ENCODE measurements at regions of chr19 and their contacts with region 1.

Region 1: DNA sequence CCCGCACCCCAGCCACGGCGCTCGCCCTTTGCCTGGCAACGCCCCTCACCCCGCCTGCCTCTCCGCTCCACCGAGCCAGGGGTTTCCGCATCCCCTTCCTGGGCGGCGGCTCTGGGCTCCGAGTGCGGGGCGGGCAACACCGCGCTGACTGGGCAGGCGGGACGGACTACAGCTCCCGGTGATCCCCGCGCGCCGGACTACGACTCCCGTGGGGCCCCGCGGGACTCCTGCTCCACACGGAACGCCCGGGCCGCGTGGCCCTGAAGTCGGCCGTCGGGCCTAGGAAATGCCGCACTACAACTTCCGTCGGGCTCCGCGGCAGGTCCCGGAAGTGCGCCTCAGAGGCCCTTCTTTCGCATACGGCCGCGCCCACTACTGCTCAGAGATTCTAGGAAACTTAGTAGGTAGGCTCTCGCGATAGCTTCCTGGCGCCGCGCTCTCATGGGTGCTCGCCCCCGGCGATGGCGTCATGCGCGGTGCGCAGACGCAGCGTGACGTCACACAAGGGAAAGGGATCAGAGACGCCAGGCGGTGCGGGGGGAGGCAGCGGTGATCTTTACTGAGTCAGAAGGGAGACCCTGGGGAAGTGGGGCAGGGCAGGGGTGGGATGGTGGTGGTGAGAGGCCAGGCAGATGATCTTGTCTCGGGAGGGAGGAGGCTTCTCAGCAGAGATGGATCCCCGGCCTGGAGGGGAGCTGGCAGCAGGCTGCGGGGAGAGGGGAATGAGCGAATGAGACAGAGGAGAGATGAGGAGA is at the start of gene JOSD2:
- DNase-seq: peak; percentile 97 to 100
- H3K4me3 ChIP-seq: peak within 1 kb of the TSS; percentile 80 to 92
- H3K27ac ChIP-seq: peak within 1 kb of the TSS; percentile 65 to 68
- H3K4me1 ChIP-seq: peaks cover 6% of the 10 kb centered on the region in 2 donors
- H3K27me3 ChIP-seq: no peaks in the 10 kb centered on the region
- CTCF ChIP-seq: no peak
- total RNA-seq, gene JOSD2: 169 TPM

Region 2: DNA sequence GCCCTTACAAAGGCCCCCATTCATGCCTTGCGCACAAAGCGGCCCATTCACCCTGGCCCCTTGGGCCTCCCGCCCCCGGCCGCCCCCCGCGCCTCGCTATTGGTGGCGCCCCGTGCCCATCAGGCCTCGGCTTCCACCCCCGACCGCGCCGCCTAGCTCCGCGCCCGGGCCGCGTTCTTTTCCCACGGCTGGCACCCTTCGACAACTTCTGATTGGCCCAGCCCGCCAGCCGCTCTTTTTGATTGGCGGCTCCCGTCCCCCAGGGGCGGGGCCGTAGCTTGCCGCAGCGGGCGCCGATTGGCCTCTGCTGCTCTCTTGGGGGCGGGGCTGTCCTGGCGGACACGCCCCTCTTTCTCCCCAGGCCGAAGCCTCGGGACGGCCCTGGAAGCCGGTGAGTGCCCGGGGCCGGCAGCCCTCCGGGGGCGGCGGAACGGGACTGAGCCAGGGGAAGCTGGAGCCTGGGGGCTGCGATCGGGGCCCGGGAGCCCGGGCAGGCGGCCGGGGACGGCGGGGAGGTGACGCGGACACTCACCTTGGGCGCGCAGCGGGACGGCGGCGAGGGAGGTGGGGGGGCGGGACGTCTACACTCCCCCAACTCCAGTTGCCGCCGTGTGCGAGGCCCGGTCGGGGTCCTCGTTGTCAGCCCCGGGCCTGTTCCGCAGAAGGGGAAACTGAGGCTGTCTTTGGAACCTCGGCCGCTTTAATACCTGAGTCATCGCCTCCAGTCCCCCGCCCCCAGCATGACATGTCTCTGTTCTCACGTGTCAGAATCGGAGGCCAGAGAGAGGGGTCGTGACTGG is 307.8 kb before region 1 on chr19 and contains the start of gene MYH14:
- intact Hi-C with region 1: loop called (anchors 10 kb)
- DNase-seq: peak; percentile 61 to 93
- H3K4me3 ChIP-seq: peak within 1 kb of the TSS; percentile 57 to 78
- H3K27ac ChIP-seq: no peak within 1 kb of the TSS
- H3K4me1 ChIP-seq: peaks cover 0 to 21% of the 10 kb centered on the region in 2 donors
- H3K27me3 ChIP-seq: no peaks in the 10 kb centered on the region
- CTCF ChIP-seq: peak in 1 of 3 experiments; percentile 10
- total RNA-seq, gene MYH14: 8.6 TPM

Region 3: GRCh38 chr19:50383852-50384684 is 127.2 kb before region 1 on chr19 and contains the start of gene POLD1:
- intact Hi-C with region 1: loop called (anchors 2 kb)
- DNase-seq: peak; percentile 94 to 99
- H3K4me3 ChIP-seq: peak within 1 kb of the TSS; percentile 61 to 76
- H3K27ac ChIP-seq: peak within 1 kb of the TSS; percentile 87 to 88
- H3K4me1 ChIP-seq: peaks cover 8 to 10% of the 10 kb centered on the region in 2 donors
- H3K27me3 ChIP-seq: no peaks in the 10 kb centered on the region
- CTCF ChIP-seq: no peak
- total RNA-seq, gene POLD1: 22.9 TPM

Region 4: GRCh38 chr19:50476224-50476942 is 34.9 kb before region 1 on chr19 and contains the starts of genes EMC10 and GARIN5A:
- intact Hi-C with region 1: loop called (anchors 1 kb)
- DNase-seq: peak; percentile 65 to 93
- H3K4me3 ChIP-seq: peak within 1 kb of the TSS; percentile 91 to 96
- H3K27ac ChIP-seq: peak within 1 kb of the TSS; percentile 41 to 55
- H3K4me1 ChIP-seq: peaks cover 8 to 12% of the 10 kb centered on the region in 2 donors
- H3K27me3 ChIP-seq: no peaks in the 10 kb centered on the region
- CTCF ChIP-seq: no peak
- total RNA-seq, gene EMC10: 87.9 TPM
- total RNA-seq, gene GARIN5A: not detected

Region 5: GRCh38 chr19:50870417-50871089 is 359.3 kb after region 1 on chr19:
- intact Hi-C with region 1: no loop called
- DNase-seq: no peak
- H3K4me3 ChIP-seq: no peak overlapping the region
- H3K27ac ChIP-seq: no peak overlapping the region
- H3K4me1 ChIP-seq: no peaks in the 10 kb centered on the region
- H3K27me3 ChIP-seq: no peaks in the 10 kb centered on the region
- CTCF ChIP-seq: no peak

Region 6: GRCh38 chr19:51108066-51108804 is 597.0 kb after region 1 on chr19 and contains the start of gene CTU1:
- intact Hi-C with region 1: loop called (anchors 2 kb)
- DNase-seq: peak; percentile 98 to 100
- H3K4me3 ChIP-seq: peak within 1 kb of the TSS; percentile 69 to 74
- H3K27ac ChIP-seq: peak within 1 kb of the TSS; percentile 37 to 45
- H3K4me1 ChIP-seq: peaks cover 6 to 9% of the 10 kb centered on the region in 2 donors
- H3K27me3 ChIP-seq: no peaks in the 10 kb centered on the region
- CTCF ChIP-seq: peak in 1 of 3 experiments; percentile 50
- total RNA-seq, gene CTU1: 8.9 TPM

Measured in ascending aorta (tissue), 2 donors.